ENCODE measurements at regions of chr14 and their contacts with region 1.

Region 1: DNA sequence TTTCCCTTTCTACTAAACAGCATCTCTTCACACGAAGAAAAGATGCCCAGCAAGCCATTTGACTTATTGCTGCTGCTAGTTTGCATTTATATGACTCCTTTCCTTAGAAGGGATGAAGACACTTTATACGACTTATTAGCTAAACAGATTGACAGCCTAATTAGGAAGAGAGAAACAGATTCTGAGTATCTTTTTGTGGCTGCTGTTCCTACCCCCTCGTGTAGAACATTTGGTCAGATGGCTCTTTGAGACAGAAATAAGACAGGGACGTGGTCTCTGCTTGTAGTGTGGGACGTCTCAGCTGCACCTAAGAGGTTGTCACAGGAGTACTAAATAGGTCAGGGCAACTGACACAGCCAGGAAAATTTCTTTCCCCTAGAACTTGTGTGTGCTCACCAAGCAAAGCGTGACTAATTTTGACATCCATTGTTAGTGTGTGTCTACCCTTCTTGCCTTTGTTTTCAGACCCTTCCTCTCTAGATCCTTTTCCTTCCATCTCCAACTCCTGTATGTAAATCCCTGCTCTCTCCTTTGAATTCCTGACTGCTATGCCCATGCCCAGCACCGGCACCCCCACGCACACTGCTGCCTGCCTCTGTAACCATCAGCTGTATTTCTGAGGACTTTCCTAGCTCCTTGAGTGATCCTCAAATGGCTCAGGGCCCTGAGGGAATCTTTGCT is 83.2 kb downstream of the DAD1 start:
- DNase-seq: no peak
- H3K4me3 Mint-ChIP-seq: peak overlapping the region; percentile 92
- H3K27ac Mint-ChIP-seq: peak overlapping the region; percentile 100
- H3K4me1 Mint-ChIP-seq: peaks cover 65% of the 10 kb centered on the region
- H3K27me3 Mint-ChIP-seq: no peaks in the 10 kb centered on the region

Region 2: DNA sequence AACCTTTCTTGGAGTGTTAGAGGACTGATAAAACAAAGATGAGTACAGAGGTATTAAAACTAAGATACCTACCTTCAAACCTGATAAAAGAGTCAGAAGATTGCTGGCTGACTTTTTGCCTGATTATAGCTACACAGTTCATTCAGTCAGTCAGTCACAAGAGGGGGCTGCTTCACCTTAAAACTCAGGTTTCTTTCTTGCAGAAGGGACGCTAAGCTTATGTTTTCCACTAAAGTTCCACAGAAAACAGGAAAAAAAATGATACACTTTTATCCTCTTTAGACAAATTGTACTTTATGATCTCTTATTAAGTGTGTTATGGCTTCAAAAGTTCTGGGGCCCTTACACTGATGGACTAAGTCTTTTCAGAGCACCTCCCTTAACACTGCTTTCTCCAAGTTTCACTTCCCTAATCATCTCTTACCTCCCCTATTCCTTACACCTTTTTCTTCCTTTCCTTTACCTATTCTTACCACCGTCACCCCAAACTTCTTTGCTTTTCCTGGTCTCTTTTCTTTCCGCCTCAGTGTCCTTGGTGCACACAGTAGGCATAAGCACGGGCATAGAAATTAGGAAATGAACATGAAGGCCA is 383.5 kb before region 1 on chr14:
- intact Hi-C with region 1: loop called (anchors 10 kb)
- DNase-seq: no peak
- H3K4me3 Mint-ChIP-seq: peak overlapping the region; percentile 83
- H3K27ac Mint-ChIP-seq: peak overlapping the region; percentile 85
- H3K4me1 Mint-ChIP-seq: peaks cover 26% of the 10 kb centered on the region
- H3K27me3 Mint-ChIP-seq: no peaks in the 10 kb centered on the region

Region 3: DNA sequence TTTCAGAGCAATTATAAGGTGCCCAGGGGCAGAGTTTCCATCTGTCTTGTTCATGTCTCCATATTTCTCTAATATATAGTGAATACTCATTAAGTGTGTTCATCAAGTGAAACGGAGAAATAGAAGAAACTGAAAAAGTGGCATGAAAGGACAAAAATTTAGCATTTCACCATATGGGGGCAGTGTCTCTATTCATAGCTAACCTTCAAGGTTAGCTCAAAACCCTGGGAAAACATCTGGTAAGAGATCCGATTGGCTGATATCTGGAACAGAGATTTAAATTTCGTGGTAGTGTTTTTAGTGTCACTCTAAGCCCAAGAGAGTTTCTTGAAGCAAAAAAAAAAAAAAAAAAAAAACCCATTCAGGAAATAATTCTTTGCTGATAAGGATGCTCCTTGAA is 284.3 kb before region 1 on chr14:
- intact Hi-C with region 1: loop called (anchors 10 kb)
- DNase-seq: no peak
- H3K4me3 Mint-ChIP-seq: peak overlapping the region; percentile 68
- H3K27ac Mint-ChIP-seq: peak overlapping the region; percentile 38
- H3K4me1 Mint-ChIP-seq: peaks cover 9% of the 10 kb centered on the region
- H3K27me3 Mint-ChIP-seq: no peaks in the 10 kb centered on the region

Region 4: GRCh38 chr14:22491683-22492621 is 13.9 kb before region 1 on chr14:
- intact Hi-C with region 1: loop called (anchors 2 kb)
- DNase-seq: no peak
- H3K4me3 Mint-ChIP-seq: peak overlapping the region; percentile 88
- H3K27ac Mint-ChIP-seq: peak overlapping the region; percentile 98
- H3K4me1 Mint-ChIP-seq: peaks cover 43% of the 10 kb centered on the region
- H3K27me3 Mint-ChIP-seq: no peaks in the 10 kb centered on the region

Region 5: DNA sequence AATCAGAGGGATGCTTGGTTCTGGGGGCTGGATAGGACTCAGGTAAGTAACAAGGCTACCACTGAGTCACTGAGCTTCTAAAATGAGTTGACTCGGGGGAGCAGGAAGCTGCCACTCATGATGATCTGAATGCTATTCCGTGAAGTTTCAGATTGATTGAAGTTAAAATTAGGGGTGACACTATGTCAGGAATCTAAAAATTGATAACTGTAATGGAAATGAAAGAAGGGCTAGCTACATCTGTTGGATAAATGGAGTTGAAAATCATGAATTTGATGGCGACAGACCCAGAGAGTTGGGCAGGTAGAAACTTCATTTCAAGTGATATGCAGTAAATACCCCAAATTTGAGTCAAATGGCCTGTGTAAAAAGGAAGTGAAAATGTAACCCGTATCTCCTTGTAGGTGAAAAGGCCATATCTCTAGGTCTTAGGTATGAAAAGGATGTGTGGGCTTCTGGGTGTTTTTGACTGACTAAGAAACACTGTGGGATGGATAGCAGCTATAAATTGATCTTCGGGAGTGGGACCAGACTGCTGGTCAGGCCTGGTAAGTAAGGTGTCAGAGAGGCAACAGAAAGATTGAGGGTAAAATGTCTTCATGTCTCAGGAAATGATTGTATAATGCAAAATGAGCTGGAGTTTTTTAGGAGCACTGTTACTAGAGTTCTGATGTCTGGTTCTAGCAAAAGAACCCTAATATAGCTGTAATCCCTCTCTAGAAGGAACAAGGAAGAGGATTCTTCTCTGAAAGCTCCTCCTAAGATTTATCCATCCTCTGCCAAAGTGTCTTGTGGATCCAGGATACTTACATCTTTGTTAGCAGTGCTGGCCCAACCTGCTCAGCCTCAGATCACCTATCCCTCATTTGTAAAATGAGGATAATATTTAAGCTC is 25.9 kb after region 1 on chr14:
- intact Hi-C with region 1: loop called (anchors 2 kb)
- DNase-seq: no peak
- H3K4me3 Mint-ChIP-seq: peak overlapping the region; percentile 76
- H3K27ac Mint-ChIP-seq: peak overlapping the region; percentile 88
- H3K4me1 Mint-ChIP-seq: peaks cover 87% of the 10 kb centered on the region
- H3K27me3 Mint-ChIP-seq: no peaks in the 10 kb centered on the region

Region 6: GRCh38 chr14:22549981-22550673 is 44.3 kb after region 1 on chr14:
- intact Hi-C with region 1: loop called (anchors 1 kb)
- DNase-seq: peak; percentile 67
- H3K4me3 Mint-ChIP-seq: peak overlapping the region; percentile 77
- H3K27ac Mint-ChIP-seq: peak overlapping the region; percentile 98
- H3K4me1 Mint-ChIP-seq: peaks cover 93% of the 10 kb centered on the region
- H3K27me3 Mint-ChIP-seq: no peaks in the 10 kb centered on the region